Transverse colon (tissue), 4 donors: ENCODE measurements at regions of chr19 and their contacts with region 1.

Region 1: DNA sequence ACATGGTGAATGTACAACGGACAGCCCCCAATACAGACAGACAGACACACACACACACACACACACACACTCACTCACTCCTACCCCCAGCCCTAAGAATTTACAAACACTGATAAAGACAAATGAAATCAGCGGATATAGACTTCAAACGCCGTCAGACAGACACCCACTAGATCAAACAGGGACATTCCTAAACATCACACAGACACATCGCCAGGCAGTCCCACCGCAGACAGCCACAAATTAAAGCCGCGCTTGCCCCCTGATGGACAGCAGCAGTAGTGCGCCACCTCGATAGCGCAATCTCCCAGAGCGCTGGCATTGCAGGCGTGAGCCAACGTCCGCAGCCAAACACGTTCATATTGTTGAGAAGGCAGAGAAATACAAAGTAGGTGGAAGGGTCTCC is 24.7 kb upstream of the ADGRE1 start:
- DNase-seq: peak; percentile 87
- H3K4me3 ChIP-seq: peak overlapping the region in 2 of 4 donors; percentile 15 to 40
- H3K27ac ChIP-seq: peak overlapping the region in 3 of 4 donors; percentile 39 to 51 (median 40)
- H3K4me1 ChIP-seq: peaks cover 0 to 8% (median 6%) of the 10 kb centered on the region in 4 donors
- H3K27me3 ChIP-seq: no peaks in the 10 kb centered on the region
- CTCF ChIP-seq: peak; percentile 79 to 92 (median 83)
- EP300 ChIP-seq: no peak
- POLR2A ChIP-seq: no peak

Region 2: GRCh38 chr19:6516659-6517291 is 345.9 kb before region 1 on chr19:
- in situ Hi-C with region 1: loop called in 3 of 4 experiments (anchors 10 to 25 kb)
- intact Hi-C with region 1: loop called (anchors 10 kb)
- DNase-seq: peak; percentile 93
- H3K4me3 ChIP-seq: peak overlapping the region; percentile 41 to 62 (median 61)
- H3K27ac ChIP-seq: peak overlapping the region; percentile 68 to 81 (median 72)
- H3K4me1 ChIP-seq: peaks cover 0 to 10% (median 5%) of the 10 kb centered on the region in 4 donors
- H3K27me3 ChIP-seq: no peaks in the 10 kb centered on the region
- CTCF ChIP-seq: peak; percentile 96 to 99 (median 97)
- EP300 ChIP-seq: no peak
- POLR2A ChIP-seq: no peak

Region 3: DNA sequence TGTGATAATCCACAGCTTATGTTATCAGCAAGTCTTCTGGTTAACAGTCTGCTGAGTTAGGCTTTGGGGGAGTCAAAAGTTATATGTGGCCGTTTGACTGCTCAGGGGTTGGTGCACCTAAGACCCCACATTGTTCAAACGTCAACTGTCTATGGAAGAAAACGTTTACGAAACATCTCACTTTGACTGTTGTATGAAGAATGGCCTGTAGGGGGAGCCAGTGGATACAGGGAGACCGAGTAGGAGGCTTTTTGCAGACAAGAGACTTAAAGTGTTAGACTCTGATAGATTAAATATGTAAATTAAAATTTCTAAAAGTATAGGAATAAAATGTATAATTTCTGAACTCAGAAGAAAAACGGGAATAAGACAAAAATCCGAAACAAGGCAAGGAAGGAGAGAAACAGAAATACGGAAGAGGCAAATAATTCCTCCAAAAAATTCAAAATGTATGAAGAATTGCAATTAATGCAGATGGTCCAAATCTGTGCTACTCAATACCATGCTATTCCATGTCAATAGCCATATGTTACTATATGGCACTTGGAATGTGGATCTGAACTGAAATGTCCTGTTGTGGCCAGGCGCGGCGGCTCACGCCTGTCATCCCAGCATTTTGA is 230.6 kb before region 1 on chr19:
- in situ Hi-C with region 1: loop called in 2 of 4 experiments (anchors 10 to 25 kb)
- intact Hi-C with region 1: loop called (anchors 5 kb)
- DNase-seq: peak; percentile 77
- H3K4me3 ChIP-seq: no peak overlapping the region
- H3K27ac ChIP-seq: no peak overlapping the region
- H3K4me1 ChIP-seq: no peaks in the 10 kb centered on the region
- H3K27me3 ChIP-seq: peaks cover 5% of the 10 kb centered on the region
- CTCF ChIP-seq: peak; percentile 78 to 87 (median 84)
- EP300 ChIP-seq: no peak
- POLR2A ChIP-seq: no peak

Region 4: GRCh38 chr19:6718741-6719539 is 143.7 kb before region 1 on chr19:
- in situ Hi-C with region 1: loop called in 1 of 4 experiments (anchors 25 kb)
- intact Hi-C with region 1: no loop called
- DNase-seq: no peak
- H3K4me3 ChIP-seq: no peak overlapping the region
- H3K27ac ChIP-seq: no peak overlapping the region
- H3K4me1 ChIP-seq: peaks cover 0 to 15% (median 0%) of the 10 kb centered on the region in 4 donors
- H3K27me3 ChIP-seq: no peaks in the 10 kb centered on the region
- CTCF ChIP-seq: no peak
- EP300 ChIP-seq: no peak
- POLR2A ChIP-seq: no peak

Region 5: DNA sequence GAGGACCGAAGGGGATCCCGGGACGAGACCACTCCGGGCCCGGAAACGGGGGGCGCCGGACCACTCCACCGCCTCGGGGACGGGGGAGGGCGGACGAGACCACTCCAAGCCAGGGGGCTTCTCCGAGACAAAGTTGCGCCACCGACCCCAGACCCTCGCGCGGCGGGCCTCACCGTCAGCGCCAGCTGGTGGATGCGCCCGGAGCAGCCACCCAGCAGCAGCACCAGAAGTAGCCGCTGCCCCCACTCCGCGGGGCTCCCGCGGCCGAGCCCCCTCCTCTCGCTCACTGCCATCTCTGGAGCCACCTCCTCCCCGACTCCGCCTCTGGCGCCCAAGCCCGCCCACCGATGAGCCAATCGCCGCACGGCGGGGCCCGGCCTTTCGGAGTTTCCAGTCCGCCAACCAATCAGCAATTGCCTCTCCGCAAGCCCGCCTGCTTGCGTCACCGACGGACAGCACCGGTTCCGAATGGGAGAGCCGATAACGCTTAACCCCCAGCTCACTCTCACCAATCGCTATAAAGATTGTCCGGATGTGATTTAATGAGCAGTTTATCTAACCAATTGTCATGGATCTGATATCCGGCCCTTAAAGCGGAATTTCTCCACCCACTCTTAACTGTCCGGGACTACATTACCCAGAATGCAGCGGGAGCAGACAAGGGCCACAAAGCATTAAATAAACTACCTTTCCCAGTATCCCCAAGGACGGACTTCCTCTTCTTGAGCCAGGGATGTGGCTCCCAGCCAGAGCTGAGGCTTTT is 125.2 kb before region 1 on chr19 and contains the start of gene GPR108:
- in situ Hi-C with region 1: loop called in 3 of 4 experiments (anchors 5 to 25 kb)
- intact Hi-C with region 1: no loop called
- DNase-seq: peak; percentile 100
- H3K4me3 ChIP-seq: peak within 1 kb of the TSS; percentile 49 to 95 (median 84)
- H3K27ac ChIP-seq: peak within 1 kb of the TSS; percentile 97 to 99 (median 98)
- H3K4me1 ChIP-seq: peaks cover 28 to 47% (median 40%) of the 10 kb centered on the region in 4 donors
- H3K27me3 ChIP-seq: no peaks in the 10 kb centered on the region
- CTCF ChIP-seq: no peak
- EP300 ChIP-seq: no peak
- POLR2A ChIP-seq: peak; percentile 65
- total RNA-seq, gene GPR108: 38.0 to 118 (median 90.6) TPM

Region 6: GRCh38 chr19:6794686-6795431 is 67.8 kb before region 1 on chr19:
- in situ Hi-C with region 1: no loop called
- intact Hi-C with region 1: no loop called
- DNase-seq: no peak
- H3K4me3 ChIP-seq: no peak overlapping the region
- H3K27ac ChIP-seq: no peak overlapping the region
- H3K4me1 ChIP-seq: no peaks in the 10 kb centered on the region
- H3K27me3 ChIP-seq: no peaks in the 10 kb centered on the region
- CTCF ChIP-seq: no peak
- EP300 ChIP-seq: no peak
- POLR2A ChIP-seq: no peak

Region 7: DNA sequence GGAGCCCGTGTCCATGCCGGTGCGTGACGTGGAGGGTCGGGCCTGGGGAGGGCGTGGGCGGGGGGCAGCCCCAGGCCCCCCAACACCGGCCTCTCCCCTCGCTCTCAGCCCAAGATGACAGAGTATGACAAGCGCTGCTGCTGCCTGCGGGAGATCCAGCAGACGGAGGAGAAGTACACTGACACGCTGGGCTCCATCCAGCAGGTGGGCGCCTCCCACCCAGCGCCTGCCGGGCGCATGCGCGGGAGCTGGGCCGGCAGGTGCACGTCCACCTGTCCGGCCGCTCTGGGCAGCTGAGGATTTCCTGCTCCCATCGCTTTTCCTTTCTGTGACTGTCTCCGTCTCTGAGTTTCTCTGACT is 40.4 kb before region 1 on chr19:
- in situ Hi-C with region 1: no loop called
- intact Hi-C with region 1: no loop called
- DNase-seq: no peak
- H3K4me3 ChIP-seq: no peak overlapping the region
- H3K27ac ChIP-seq: no peak overlapping the region
- H3K4me1 ChIP-seq: no peaks in the 10 kb centered on the region
- H3K27me3 ChIP-seq: no peaks in the 10 kb centered on the region
- CTCF ChIP-seq: no peak
- EP300 ChIP-seq: no peak
- POLR2A ChIP-seq: no peak